Posterior cingulate gyrus (tissue), 11 donors: ENCODE measurements at regions of chr10 and their contacts with region 1.

Region 1: DNA sequence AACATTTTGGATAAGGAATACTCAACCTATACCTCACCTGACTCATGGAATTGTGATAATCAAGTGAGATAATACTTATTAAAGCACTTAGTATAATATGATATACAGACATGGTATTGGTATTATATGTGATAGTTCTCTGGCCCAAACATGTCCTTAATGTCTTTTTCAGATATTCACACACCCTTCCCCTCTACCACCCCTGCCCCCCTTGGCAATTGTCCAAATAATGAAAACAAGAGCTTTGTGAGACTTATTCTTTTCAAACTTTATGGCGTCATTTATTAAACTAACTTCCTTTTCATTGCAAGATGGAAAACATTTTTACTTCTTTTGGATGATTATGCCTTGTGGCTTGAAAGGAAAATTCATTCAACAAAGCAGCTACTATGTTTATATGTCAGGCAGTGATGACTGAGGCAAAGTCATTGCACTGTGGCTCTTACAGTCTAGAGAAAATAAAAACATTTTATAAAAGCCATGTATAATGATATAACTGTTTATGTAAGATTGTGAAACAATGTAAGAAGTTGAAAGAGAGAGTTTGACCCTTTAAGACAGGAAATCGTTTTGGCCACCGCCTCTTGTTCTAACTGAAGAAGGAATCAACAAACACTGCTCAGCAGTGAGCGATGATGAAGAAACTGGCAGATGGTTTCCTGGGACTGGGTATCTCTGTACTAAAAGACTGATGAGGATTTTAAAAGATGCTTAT is 27.4 kb downstream of the MINPP1 start:
- DNase-seq: no peak

Region 2: GRCh38 chr10:87771871-87772500 is 239.9 kb after region 1 on chr10:
- intact Hi-C with region 1: loop called (anchors 5 kb)
- DNase-seq: no peak